A673 (cell line): ENCODE measurements at regions of chr13 and their contacts with region 1.

Region 1: GRCh38 chr13:29472332-29472961 is 123.0 kb downstream of the SLC7A1 start:
- DNase-seq: peak; percentile 61
- H3K4me3 ChIP-seq: no peak overlapping the region
- H3K27ac ChIP-seq: no peak overlapping the region
- H3K4me1 ChIP-seq: no peaks in the 10 kb centered on the region
- H3K27me3 ChIP-seq: no peaks in the 10 kb centered on the region
- CTCF ChIP-seq: peak; percentile 97

Region 2: GRCh38 chr13:29294821-29295220 is 177.6 kb before region 1 on chr13:
- CTCF ChIA-PET with region 1: no interaction called
- POLR2A ChIA-PET with region 1: no interaction called
- intact Hi-C with region 1: no loop called
- DNase-seq: no peak
- H3K4me3 ChIP-seq: no peak overlapping the region
- H3K27ac ChIP-seq: no peak overlapping the region
- H3K4me1 ChIP-seq: no peaks in the 10 kb centered on the region
- H3K27me3 ChIP-seq: peaks cover 17% of the 10 kb centered on the region
- CTCF ChIP-seq: no peak

Region 3: DNA sequence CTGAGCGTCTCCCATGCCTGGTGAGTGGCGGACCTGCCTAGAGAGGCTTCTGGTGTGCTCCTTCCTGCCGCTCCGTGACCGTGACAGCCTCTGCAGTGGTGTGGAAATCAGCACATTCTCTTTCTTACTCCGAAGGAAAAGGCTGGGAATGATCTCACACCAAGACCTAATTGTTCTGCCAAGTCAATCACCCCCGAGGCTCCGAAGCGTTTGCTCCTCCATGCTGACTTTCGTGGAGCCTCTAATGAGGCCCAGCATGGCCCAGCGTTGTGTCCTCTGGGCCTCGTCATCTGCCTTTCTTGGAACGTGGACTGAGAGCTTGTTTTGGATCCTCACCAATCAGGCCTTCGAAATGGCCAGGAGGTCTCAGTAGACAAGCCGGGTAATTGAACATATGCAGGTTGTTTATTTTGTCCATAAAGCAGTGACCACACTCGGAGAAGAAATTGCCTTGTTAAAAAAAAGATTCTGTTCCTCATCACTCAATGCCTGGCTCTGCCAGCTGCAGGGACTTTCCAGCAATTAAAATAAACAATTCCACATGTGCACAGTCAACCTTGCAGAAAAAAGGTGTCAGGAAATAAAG is 270.8 kb after region 1 on chr13:
- CTCF ChIA-PET with region 1: interaction called, 10 read pairs
- POLR2A ChIA-PET with region 1: no interaction called
- intact Hi-C with region 1: no loop called
- DNase-seq: no peak
- H3K4me3 ChIP-seq: no peak overlapping the region
- H3K27ac ChIP-seq: no peak overlapping the region
- H3K4me1 ChIP-seq: no peaks in the 10 kb centered on the region
- H3K27me3 ChIP-seq: no peaks in the 10 kb centered on the region
- CTCF ChIP-seq: no peak